ENCODE measurements at regions of chr17 and their contacts with region 1.

Region 1: DNA sequence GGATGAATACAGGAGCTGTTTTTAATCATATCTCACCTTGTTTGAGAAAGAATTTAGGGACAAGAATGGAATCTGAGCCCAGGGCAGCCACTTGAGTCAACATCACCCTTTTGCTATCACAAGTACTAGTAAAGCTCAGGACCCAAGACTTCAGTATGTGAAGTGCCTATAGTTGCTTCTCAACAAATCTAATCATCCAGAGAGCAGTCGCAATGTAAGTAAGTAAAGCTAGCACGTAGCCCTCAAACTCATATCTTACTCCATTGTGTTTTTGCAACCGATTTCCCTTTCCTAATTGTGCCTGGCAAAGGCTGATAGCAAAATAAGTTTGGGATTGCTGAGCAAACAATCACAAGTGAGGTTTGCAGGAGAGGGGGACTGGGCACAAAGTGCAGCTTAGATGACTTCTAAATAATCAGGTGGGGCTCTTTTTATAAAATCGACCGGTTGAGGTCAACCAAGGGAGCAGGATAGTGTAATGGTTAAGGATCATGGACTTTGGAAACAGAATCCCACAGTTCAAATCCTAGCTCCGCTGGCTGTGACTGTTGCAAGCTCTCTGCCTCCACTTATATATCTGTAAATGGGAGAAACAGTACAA is 13.0 kb downstream of the TOB1 start:
- DNase-seq: no peak
- ATAC-seq: no peak
- H3K4me3 ChIP-seq: no peak overlapping the region
- H3K27ac ChIP-seq: peak overlapping the region; percentile 28
- H3K4me1 ChIP-seq: peaks cover 17% of the 10 kb centered on the region
- H3K27me3 ChIP-seq: no peaks in the 10 kb centered on the region
- CTCF ChIP-seq: no peak

Region 2: DNA sequence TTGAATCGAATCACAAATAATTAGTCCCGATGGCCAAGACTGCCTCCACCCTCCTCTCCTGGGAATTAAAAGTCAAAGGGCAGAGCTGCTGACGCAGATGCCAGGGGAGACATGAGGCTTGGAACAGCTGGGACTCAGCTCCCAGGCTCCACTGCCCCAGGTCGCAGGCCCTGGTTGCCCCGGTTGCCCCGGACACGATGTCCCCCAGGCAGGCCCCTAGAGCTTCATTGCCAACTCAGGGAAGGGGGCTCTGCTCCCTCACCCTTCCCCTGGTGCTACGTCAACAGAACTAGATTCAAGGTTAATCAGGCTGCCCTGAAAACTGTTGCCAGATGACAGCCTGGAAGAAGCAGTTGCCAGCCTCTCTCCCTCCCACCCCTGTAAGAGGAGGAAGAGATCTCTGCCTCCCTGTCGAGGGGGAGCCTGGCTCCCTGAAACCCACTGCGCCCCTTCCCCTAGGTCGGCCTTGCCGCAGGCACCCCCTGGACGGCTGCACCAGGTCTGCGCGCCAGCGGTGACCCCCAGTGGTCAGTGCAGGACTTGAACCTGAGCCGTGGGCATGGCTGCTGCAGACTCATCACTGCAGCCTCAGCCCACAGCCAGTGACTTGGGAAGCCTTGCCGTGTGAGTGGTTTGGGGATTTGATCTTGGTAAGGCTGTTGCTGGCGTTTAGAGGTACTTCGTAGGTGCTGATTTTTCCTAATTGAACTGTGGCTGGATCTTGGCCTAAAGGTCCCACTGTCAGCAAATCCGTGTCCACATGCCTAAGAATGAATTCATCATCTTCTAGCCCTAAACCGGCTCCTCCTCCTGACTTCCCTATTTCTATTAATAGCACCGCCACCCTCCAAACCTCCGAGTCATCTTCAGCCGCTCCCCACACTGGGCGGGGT is 97.1 kb after region 1 on chr17:
- intact Hi-C with region 1: loop called (anchors 5 kb)
- DNase-seq: peak; percentile 87
- ATAC-seq: peak; percentile 82
- H3K4me3 ChIP-seq: peak overlapping the region; percentile 8
- H3K27ac ChIP-seq: peak overlapping the region; percentile 83
- H3K4me1 ChIP-seq: peaks cover 43% of the 10 kb centered on the region
- H3K27me3 ChIP-seq: no peaks in the 10 kb centered on the region
- CTCF ChIP-seq: peak; percentile 75